CD4-positive, alpha-beta T cell (primary cell): ENCODE measurements at regions of chr9 and their contacts with region 1.

Region 1: DNA sequence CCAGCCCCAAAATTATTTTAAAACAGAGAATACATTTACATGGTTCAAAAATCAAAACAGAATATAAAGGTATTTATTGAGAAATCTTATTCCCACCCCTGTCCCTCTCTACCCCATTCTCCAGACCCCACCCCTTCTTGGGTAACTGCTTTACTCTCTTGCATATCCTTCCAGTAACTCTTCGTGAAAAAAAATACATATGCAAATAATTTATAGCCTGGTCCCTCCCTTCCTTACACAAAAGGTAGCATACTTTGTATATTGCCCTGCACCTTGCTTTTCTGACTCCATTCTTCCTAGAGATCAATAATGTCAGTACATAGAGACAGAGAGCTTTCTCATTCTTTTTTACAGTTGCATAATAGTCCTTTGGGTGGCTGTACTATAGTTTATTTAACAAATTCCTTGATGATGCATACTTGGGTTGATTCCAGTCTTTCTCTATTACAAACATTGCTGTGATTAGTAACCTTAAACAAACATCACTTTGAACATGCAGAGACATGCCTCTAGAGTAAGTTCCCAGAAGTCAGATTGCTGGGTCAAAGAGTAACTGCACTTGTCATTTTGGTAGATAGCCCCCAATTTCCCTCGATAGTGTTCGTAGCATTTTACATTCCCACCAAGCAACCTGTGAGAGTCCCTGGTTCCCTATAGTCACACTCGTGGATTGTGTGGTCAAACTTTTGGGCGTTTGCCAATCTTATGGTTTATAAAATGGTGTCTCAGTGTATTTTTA is 47.8 kb downstream of the STOM start:
- DNase-seq: peak in 2 of 14 experiments; percentile 5 to 10
- ATAC-seq: no peak
- H3K4me3 ChIP-seq: no peak overlapping the region
- H3K4me3 Mint-ChIP-seq: no peak overlapping the region
- H3K27ac ChIP-seq: no peak overlapping the region
- H3K27ac Mint-ChIP-seq: no peak overlapping the region
- H3K4me1 ChIP-seq: peaks cover 25% of the 10 kb centered on the region
- H3K4me1 Mint-ChIP-seq: peaks cover 18% of the 10 kb centered on the region
- H3K27me3 ChIP-seq: no peaks in the 10 kb centered on the region
- H3K27me3 Mint-ChIP-seq: no peaks in the 10 kb centered on the region
- CTCF ChIP-seq: no peak

Region 2: DNA sequence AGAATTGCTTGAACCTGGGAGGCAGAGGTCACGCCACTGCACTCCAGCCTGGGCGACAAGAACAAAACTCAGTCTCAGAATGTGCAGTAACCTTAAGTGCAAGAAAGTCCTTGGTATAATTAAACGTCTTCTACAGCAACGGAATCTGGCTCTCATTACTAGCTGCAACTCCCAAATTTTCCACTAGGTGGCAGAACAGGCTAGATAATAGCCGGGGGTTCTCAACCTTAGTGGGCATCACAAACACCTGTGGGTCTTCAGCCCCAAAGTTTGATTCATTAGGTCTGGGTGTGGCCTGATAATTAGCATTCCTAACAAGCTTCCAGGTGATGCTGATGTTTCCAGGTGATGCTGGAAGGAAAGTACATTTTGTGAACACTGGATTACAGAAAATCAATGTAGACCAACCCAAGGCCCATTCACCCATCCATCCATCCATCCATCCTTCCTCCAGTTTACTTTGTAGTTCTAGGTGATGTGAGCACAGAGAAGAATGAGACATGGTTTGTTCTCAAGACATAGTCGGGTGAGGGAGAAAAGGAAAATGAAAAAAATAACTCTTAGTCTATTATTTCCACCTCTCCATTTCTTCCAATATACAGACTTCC is 566.3 kb before region 1 on chr9:
- CTCF ChIA-PET with region 1: interaction called, 10 read pairs
- POLR2A ChIA-PET with region 1: no interaction called
- intact Hi-C with region 1: loop called in 1 of 2 experiments (anchors 5 kb)
- DNase-seq: peak; percentile 33 to 83 (median 60)
- ATAC-seq: peak; percentile 67
- H3K4me3 ChIP-seq: no peak overlapping the region
- H3K4me3 Mint-ChIP-seq: no peak overlapping the region
- H3K27ac ChIP-seq: no peak overlapping the region
- H3K27ac Mint-ChIP-seq: peak overlapping the region; percentile 57
- H3K4me1 ChIP-seq: no peaks in the 10 kb centered on the region
- H3K4me1 Mint-ChIP-seq: peaks cover 18% of the 10 kb centered on the region
- H3K27me3 ChIP-seq: no peaks in the 10 kb centered on the region
- H3K27me3 Mint-ChIP-seq: no peaks in the 10 kb centered on the region
- CTCF ChIP-seq: peak; percentile 96

Region 3: DNA sequence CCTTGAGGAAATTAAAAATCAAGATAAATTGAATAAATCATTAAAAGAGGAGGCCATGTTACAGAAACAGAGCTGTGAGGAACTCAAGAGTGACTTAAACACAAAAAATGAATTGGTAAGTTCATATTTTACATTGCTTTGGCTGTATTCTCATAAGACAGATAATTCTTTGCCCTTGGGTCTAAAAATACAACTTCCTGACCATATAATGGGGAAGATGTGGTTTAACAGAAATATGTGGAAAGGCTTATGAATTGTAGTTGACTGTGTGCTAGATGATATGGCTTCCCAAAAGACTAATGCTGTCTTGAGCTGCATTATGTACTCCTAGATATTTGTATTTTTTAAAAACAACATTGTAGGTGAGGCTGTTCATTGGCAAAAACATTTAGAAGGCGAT is 214.3 kb before region 1 on chr9:
- CTCF ChIA-PET with region 1: no interaction called
- POLR2A ChIA-PET with region 1: no interaction called
- intact Hi-C with region 1: no loop called
- DNase-seq: no peak
- ATAC-seq: no peak
- H3K4me3 ChIP-seq: no peak overlapping the region
- H3K4me3 Mint-ChIP-seq: no peak overlapping the region
- H3K27ac ChIP-seq: no peak overlapping the region
- H3K27ac Mint-ChIP-seq: no peak overlapping the region
- H3K4me1 ChIP-seq: no peaks in the 10 kb centered on the region
- H3K4me1 Mint-ChIP-seq: peaks cover 27% of the 10 kb centered on the region
- H3K27me3 ChIP-seq: no peaks in the 10 kb centered on the region
- H3K27me3 Mint-ChIP-seq: no peaks in the 10 kb centered on the region
- CTCF ChIP-seq: no peak

Region 4: DNA sequence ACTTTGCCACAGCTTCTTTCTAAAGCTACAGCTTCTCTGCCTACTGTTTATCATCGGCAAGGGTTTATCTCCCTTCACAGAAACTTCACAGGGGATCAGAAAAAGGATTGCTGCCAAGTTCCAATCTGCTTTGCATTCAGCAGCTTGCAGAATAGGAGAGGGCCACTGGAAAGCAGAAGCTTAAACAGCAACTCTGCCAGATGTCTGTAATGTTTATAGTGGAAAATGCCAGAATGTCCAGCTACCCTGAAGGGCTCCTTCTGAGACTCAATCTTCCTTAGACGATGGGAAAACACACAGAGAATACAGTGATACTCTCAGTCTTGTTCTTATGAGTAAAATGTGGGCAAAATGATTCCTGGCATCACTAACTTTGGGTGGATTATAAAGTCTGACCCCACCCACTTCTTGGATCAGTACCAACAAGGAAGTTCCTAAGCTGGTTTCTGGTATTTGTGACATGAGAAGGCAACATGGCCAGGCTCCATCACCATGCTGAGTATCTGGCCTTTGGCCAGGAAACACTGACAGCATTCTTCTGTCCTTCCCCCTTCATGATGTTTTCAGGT is 28.9 kb after region 1 on chr9:
- CTCF ChIA-PET with region 1: interaction called, 19 read pairs
- POLR2A ChIA-PET with region 1: no interaction called
- intact Hi-C with region 1: no loop called
- DNase-seq: no peak
- ATAC-seq: no peak
- H3K4me3 ChIP-seq: no peak overlapping the region
- H3K4me3 Mint-ChIP-seq: no peak overlapping the region
- H3K27ac ChIP-seq: no peak overlapping the region
- H3K27ac Mint-ChIP-seq: no peak overlapping the region
- H3K4me1 ChIP-seq: peaks cover 36% of the 10 kb centered on the region
- H3K4me1 Mint-ChIP-seq: peaks cover 19% of the 10 kb centered on the region
- H3K27me3 ChIP-seq: no peaks in the 10 kb centered on the region
- H3K27me3 Mint-ChIP-seq: no peaks in the 10 kb centered on the region
- CTCF ChIP-seq: no peak

Region 5: DNA sequence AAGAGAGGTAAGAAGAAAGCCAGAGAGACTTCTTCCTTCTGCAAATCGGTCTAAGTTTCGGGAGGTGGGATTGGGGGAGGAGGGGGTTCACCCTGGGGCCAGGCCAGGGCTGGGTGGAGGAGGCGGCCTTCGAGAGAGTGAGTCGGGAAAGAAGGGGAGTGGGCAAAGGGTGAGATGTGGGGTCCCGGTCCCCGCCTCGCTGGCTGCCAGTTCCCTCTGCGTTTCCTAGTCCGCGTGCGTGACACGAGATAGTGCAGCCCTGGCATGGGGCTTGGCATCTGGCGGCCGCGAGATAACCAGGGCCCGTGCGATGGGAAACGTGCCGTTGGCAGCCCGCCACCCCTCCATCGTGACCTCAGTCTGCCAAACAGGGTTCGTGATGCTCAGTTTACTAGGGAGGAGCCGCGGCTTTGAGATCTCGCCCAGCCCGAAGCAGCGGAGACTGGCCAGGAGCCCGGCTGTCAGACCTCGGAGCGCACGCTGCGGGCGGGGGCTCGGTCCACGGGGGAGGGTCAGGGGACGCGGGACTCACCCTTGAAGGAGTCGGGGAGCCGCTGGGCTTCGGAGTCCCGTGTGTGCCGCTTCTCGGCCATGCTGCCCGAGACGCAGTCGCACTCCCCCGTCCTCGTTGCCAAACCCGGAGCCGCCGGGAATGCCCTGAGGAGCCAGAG is 47.5 kb after region 1 on chr9 and contains the start of gene STOM:
- CTCF ChIA-PET with region 1: interaction called, 30 read pairs
- POLR2A ChIA-PET with region 1: interaction called, 3 read pairs
- intact Hi-C with region 1: no loop called
- DNase-seq: peak in 12 of 14 experiments; percentile 47 to 89 (median 60)
- ATAC-seq: peak; percentile 52
- H3K4me3 ChIP-seq: peak within 1 kb of the TSS; percentile 98
- H3K4me3 Mint-ChIP-seq: peak within 1 kb of the TSS; percentile 89
- H3K27ac ChIP-seq: peak within 1 kb of the TSS; percentile 76 to 79
- H3K27ac Mint-ChIP-seq: peak within 1 kb of the TSS; percentile 89
- H3K4me1 ChIP-seq: peaks cover 16% of the 10 kb centered on the region
- H3K4me1 Mint-ChIP-seq: peaks cover 70% of the 10 kb centered on the region
- H3K27me3 ChIP-seq: no peaks in the 10 kb centered on the region
- H3K27me3 Mint-ChIP-seq: no peaks in the 10 kb centered on the region
- CTCF ChIP-seq: no peak
- total RNA-seq, gene STOM: 26.1 to 27.9 TPM

Region 6: GRCh38 chr9:121386442-121387185 is 64.4 kb after region 1 on chr9:
- CTCF ChIA-PET with region 1: interaction called, 28 read pairs
- POLR2A ChIA-PET with region 1: no interaction called
- intact Hi-C with region 1: no loop called
- DNase-seq: no peak
- ATAC-seq: no peak
- H3K4me3 ChIP-seq: no peak overlapping the region
- H3K4me3 Mint-ChIP-seq: no peak overlapping the region
- H3K27ac ChIP-seq: no peak overlapping the region
- H3K27ac Mint-ChIP-seq: no peak overlapping the region
- H3K4me1 ChIP-seq: no peaks in the 10 kb centered on the region
- H3K4me1 Mint-ChIP-seq: no peaks in the 10 kb centered on the region
- H3K27me3 ChIP-seq: no peaks in the 10 kb centered on the region
- H3K27me3 Mint-ChIP-seq: peaks cover 3% of the 10 kb centered on the region
- CTCF ChIP-seq: no peak

Region 7: GRCh38 chr9:121399883-121400607 is 77.8 kb after region 1 on chr9:
- CTCF ChIA-PET with region 1: interaction called, 118 read pairs
- POLR2A ChIA-PET with region 1: interaction called, 3 read pairs
- intact Hi-C with region 1: loop called (anchors 1 kb)
- DNase-seq: peak in 3 of 14 experiments; percentile 68 to 81 (median 76)
- ATAC-seq: no peak
- H3K4me3 ChIP-seq: no peak overlapping the region
- H3K4me3 Mint-ChIP-seq: no peak overlapping the region
- H3K27ac ChIP-seq: no peak overlapping the region
- H3K27ac Mint-ChIP-seq: no peak overlapping the region
- H3K4me1 ChIP-seq: no peaks in the 10 kb centered on the region
- H3K4me1 Mint-ChIP-seq: no peaks in the 10 kb centered on the region
- H3K27me3 ChIP-seq: no peaks in the 10 kb centered on the region
- H3K27me3 Mint-ChIP-seq: peaks cover 5% of the 10 kb centered on the region
- CTCF ChIP-seq: peak; percentile 83

Region 8: DNA sequence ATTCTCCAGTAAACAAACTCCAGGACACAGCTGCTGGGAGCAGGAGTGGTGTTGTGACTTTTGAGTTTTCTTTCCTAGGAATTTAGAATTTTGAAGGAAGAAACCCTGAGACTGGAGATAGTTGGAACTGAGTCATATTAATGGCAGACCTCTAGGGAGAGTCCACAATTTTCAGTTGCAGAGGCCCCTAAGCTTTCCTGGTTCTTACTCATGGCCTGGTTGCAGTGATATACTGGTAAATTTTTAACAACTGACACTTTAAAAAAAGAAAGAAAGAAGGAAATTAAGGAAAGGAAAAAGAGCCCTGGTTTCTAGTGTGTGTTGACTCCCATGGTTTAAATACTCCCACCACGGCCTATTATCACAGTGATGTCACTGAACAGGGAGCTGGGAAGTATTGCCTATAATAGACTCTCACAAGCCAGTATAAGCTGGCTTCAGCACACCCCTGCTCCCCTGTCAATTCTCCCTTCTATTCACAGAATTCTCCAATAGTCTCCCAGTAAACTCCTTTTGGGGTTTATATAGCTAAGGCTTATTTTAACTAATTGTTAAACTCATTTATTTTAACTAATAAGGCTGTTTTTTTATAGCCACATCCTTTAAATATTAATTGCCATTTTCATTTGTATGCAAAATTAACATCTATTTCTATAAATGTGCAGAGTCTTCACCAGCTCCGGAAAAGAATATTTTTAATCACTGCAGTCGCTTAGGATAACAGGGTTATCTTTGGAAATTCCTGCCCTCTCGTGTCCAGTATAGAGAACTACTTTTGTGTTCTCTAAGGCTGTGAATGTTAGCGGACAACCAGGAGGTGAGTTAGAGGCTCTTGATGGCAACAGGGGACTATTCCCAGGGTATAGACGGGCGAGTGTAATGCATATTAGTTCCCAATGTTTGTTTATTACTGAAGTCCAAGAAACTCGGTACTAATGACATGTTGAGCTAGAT is 117.8 kb after region 1 on chr9:
- CTCF ChIA-PET with region 1: no interaction called
- POLR2A ChIA-PET with region 1: no interaction called
- intact Hi-C with region 1: no loop called
- DNase-seq: no peak
- ATAC-seq: no peak
- H3K4me3 ChIP-seq: no peak overlapping the region
- H3K4me3 Mint-ChIP-seq: no peak overlapping the region
- H3K27ac ChIP-seq: no peak overlapping the region
- H3K27ac Mint-ChIP-seq: no peak overlapping the region
- H3K4me1 ChIP-seq: no peaks in the 10 kb centered on the region
- H3K4me1 Mint-ChIP-seq: no peaks in the 10 kb centered on the region
- H3K27me3 ChIP-seq: peaks cover 2 to 14% of the 10 kb centered on the region in 2 experiments
- H3K27me3 Mint-ChIP-seq: peaks cover 41% of the 10 kb centered on the region
- CTCF ChIP-seq: no peak

Region 9: GRCh38 chr9:121819428-121820231 is 497.4 kb after region 1 on chr9:
- CTCF ChIA-PET with region 1: no interaction called
- POLR2A ChIA-PET with region 1: no interaction called
- intact Hi-C with region 1: no loop called
- DNase-seq: no peak
- ATAC-seq: no peak
- H3K4me3 ChIP-seq: no peak overlapping the region
- H3K4me3 Mint-ChIP-seq: no peak overlapping the region
- H3K27ac ChIP-seq: no peak overlapping the region
- H3K27ac Mint-ChIP-seq: no peak overlapping the region
- H3K4me1 ChIP-seq: no peaks in the 10 kb centered on the region
- H3K4me1 Mint-ChIP-seq: no peaks in the 10 kb centered on the region
- H3K27me3 ChIP-seq: no peaks in the 10 kb centered on the region
- H3K27me3 Mint-ChIP-seq: no peaks in the 10 kb centered on the region
- CTCF ChIP-seq: no peak